ENCODE measurements at regions of chr11 and their contacts with region 1.

Region 1: DNA sequence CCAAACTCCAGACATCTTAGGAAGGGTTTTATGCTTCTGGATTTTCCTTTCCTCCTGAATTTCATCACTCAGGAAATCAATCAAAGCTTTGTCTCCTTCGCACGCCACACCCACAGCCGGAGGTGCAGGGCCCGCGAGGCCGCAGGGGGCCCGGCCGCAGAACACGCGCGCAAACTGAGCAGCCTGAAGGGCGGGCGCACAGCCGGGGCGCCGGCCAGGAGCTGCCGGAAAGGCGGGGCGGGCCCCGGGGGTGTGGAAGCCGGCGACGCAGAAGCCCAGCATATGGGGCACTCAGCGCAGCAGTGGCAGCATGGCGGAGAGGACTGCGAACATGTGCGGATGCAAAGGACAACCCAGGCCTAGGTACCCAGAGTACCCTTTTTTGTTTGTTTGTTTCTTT is 33.1 kb upstream of the SPTBN2 start:
- DNase-seq: no peak
- H3K4me3 ChIP-seq: no peak overlapping the region
- CTCF ChIP-seq: no peak

Region 2: DNA sequence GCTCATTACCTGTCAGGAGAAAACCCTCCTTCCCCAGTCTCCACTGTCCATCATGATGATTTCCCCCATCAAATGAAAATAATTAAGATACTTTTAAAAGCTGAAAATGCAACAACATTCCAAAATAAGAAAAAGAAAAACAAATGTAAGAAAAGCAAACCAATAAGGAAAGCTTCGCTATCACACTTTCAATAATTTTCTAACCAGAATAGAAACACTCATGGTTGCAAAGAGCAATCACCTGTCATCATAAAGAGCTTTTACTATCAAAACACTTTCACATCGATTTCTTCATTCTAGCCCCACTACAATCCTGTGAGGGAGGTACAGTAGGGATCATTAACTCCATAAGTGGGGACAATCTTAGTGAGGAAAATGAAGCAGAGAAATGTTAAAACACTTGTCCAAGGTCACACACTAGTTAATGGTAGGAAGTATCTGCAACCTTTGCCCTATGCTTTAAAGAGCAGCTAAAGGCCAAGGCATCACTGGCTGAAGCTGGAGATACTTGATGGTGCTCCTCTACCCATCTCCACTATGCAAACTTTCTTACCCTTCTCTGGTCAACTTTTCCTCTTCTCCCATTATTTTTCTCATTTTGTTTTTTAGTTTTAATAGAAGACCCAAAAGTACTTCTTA is 87.0 kb before region 1 on chr11:
- in situ Hi-C with region 1: no loop called
- DNase-seq: no peak
- H3K4me3 ChIP-seq: no peak overlapping the region
- CTCF ChIP-seq: no peak

Region 3: GRCh38 chr11:66800720-66801428 is 38.8 kb after region 1 on chr11:
- in situ Hi-C with region 1: loop called (anchors 5 kb)
- DNase-seq: no peak
- H3K4me3 ChIP-seq: no peak overlapping the region
- CTCF ChIP-seq: no peak

Region 4: DNA sequence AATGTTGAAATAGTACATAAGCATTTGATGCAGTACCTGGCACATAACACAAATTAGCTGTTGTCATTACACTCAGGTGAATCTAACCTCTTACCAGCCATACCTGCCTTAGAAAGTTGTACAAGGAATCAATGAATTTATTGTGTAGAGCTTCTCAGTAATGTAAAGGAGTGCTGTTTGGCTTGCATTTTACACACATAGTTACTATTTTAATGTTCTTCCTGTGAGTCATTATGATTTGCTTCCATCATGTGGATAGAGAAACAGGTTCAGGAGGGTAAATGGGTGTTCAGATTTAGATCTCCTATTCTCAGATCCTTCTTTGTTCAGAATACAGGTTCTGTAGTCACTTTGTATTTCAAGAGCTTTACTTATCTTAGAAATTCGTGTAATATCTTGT is 53.6 kb after region 1 on chr11:
- in situ Hi-C with region 1: no loop called
- DNase-seq: no peak
- H3K4me3 ChIP-seq: no peak overlapping the region
- CTCF ChIP-seq: no peak